ENCODE measurements at regions of chr13 and their contacts with region 1.

Region 1: GRCh38 chr13:50123862-50124536 is 108.8 kb downstream of the KCNRG start:
- DNase-seq: peak; percentile 89
- H3K4me3 Mint-ChIP-seq: peak overlapping the region; percentile 77
- H3K27ac Mint-ChIP-seq: peak overlapping the region; percentile 92
- H3K4me1 Mint-ChIP-seq: peaks cover 48% of the 10 kb centered on the region
- H3K27me3 Mint-ChIP-seq: peaks cover 15% of the 10 kb centered on the region

Region 2: GRCh38 chr13:49936085-49936940 is 187.7 kb before region 1 on chr13 and contains the start of gene SPRYD7:
- CTCF ChIA-PET with region 1: interaction called, 3 read pairs
- intact Hi-C with region 1: loop called (anchors 1 kb)
- DNase-seq: peak; percentile 96
- H3K4me3 Mint-ChIP-seq: peak within 1 kb of the TSS; percentile 90
- H3K27ac Mint-ChIP-seq: peak within 1 kb of the TSS; percentile 70
- H3K4me1 Mint-ChIP-seq: peaks cover 7% of the 10 kb centered on the region
- H3K27me3 Mint-ChIP-seq: peaks cover 2% of the 10 kb centered on the region
- total RNA-seq, gene SPRYD7: 2.5 to 2.6 TPM

Region 3: DNA sequence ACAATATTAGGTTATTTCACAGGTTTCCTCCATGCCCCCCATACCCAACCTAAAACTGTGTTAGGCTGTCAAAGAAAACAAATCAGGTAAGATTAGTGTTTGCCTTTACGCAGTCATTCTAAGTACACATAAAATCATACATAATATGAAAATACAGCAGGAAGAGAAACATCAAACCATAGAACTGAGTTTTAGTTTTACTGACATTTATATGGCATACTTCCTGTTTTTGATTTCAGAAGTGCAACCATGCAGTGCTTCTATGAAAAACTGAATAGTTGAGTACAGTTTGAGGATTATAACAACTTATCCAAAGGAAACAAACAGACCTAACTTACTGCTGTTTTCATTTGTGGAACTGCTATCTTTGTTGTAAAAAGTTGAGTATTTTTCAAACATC is 17.4 kb before region 1 on chr13:
- CTCF ChIA-PET with region 1: interaction called, 3 read pairs
- intact Hi-C with region 1: loop called (anchors 1 kb)
- DNase-seq: no peak
- H3K4me3 Mint-ChIP-seq: no peak overlapping the region
- H3K27ac Mint-ChIP-seq: peak overlapping the region; percentile 69
- H3K4me1 Mint-ChIP-seq: peaks cover 36% of the 10 kb centered on the region
- H3K27me3 Mint-ChIP-seq: no peaks in the 10 kb centered on the region

Region 4: GRCh38 chr13:50425772-50426171 is 301.8 kb after region 1 on chr13:
- CTCF ChIA-PET with region 1: no interaction called
- intact Hi-C with region 1: loop called (anchors 5 kb)
- DNase-seq: no peak
- H3K4me3 Mint-ChIP-seq: no peak overlapping the region
- H3K27ac Mint-ChIP-seq: no peak overlapping the region
- H3K4me1 Mint-ChIP-seq: peaks cover 23% of the 10 kb centered on the region
- H3K27me3 Mint-ChIP-seq: no peaks in the 10 kb centered on the region

Region 5: GRCh38 chr13:50810998-50811397 is 687.0 kb after region 1 on chr13:
- CTCF ChIA-PET with region 1: no interaction called
- intact Hi-C with region 1: no loop called
- DNase-seq: no peak
- H3K4me3 Mint-ChIP-seq: no peak overlapping the region
- H3K27ac Mint-ChIP-seq: no peak overlapping the region
- H3K4me1 Mint-ChIP-seq: peaks cover 4% of the 10 kb centered on the region
- H3K27me3 Mint-ChIP-seq: no peaks in the 10 kb centered on the region